Activated naive CD4-positive, alpha-beta T cell treated with anti-CD3 and anti-CD28 coated beads for 36 hours (primary cell): ENCODE measurements at regions of chr12 and their contacts with region 1.

Region 1: DNA sequence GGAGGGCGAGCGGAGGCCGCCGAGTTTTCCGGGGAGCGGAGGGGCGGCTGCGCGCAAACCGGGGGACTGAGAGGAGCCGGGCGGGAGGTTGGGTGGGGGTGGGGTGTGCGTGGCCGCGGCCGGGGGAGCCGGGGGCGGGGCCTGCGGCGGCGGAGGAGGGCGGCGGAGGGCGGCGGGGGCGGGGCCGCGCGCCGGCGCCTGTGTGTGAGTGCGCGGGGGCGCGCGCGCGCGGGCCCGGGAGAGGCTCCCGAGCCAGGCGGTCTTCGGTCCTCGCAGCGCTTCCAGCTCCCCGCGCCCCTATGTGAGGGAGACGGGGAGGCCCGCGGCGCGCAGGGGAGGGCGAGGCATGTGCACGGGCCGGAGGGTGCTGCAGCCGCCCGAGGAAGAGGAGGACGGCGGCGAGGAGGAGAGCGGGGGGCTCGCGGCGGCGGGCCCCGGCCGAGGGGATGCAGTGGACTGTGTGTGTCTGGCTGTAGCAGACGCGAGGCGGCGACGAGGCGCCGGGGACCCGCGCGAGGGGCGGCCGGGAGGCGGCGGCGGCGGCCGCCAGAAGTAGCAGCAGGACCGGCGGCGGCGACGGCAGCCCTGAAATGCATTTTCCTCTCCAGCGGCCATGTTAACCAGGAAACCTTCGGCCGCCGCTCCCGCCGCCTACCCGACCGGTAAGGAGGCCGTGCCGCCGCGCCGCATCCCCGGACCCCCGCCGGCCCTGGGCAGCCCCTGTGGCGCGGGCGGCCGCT is at the start of gene DYRK2:
- DNase-seq: peak; percentile 65
- H3K4me3 Mint-ChIP-seq: peak within 1 kb of the TSS; percentile 98
- H3K27ac Mint-ChIP-seq: peak within 1 kb of the TSS; percentile 81
- H3K4me1 Mint-ChIP-seq: peaks cover 41% of the 10 kb centered on the region
- H3K27me3 Mint-ChIP-seq: no peaks in the 10 kb centered on the region
- total RNA-seq, gene DYRK2: 29.3 to 30.0 TPM

Region 2: DNA sequence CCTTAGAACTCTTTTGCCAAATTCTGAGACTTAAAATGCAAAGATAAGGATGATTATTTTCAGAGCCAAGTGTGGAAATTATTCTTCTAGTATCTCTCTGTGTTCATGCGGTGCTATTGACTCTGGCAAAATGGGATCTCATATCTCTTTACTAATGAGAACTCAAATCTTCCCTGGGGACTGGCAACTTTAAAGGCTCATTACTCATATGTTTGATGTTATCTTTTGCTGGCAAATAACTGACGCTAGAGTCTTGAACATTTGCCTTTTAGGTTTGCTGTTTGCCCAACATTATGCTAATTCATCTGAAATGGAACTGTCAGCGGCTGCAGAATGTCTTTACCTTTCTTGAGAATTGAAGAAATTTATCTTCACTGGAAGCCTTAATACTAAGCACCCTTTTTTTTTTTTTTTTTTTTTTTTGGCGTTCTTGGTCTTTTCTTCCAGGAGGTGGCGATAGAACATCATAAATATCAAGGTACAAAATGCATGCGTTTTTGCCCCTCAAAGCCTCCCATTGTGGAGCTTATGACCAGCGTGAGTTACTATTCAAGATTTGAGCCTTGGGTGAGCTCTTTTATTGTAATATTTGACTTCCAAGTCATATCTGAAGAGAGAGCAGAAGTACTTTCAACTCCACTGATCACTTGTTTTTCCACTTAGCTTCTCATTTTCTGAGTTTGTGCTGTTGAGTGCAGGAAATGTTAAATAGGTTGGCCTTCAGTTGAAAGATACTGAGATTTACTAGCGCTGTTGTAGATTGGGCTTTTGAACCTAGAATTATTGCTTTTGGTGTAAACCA is 292.9 kb before region 1 on chr12:
- CTCF ChIA-PET with region 1: no interaction called
- intact Hi-C with region 1: loop called (anchors 5 kb)
- DNase-seq: peak; percentile 17
- H3K4me3 Mint-ChIP-seq: no peak overlapping the region
- H3K27ac Mint-ChIP-seq: no peak overlapping the region
- H3K4me1 Mint-ChIP-seq: peaks cover 25% of the 10 kb centered on the region
- H3K27me3 Mint-ChIP-seq: no peaks in the 10 kb centered on the region

Region 3: DNA sequence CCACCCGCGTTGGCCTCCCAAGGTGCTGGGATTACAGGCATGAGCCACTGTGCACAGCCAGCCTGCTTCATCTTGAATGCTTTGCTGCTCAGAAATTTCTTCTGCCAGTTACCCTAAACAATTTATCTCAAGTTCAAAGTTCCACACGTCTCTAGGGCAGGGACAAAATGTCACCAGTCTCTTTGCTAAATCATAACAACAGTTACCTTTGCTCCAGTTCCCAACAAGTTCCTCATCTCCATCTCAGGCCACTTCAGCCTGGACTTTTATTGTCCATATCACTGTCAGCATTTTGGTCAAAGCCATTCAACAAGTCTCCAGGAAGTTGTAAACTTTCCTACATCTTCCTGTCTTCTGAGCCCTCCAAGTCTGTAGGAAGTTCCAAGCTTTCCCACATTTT is 159.7 kb before region 1 on chr12:
- CTCF ChIA-PET with region 1: no interaction called
- intact Hi-C with region 1: no loop called
- DNase-seq: no peak
- H3K4me3 Mint-ChIP-seq: no peak overlapping the region
- H3K27ac Mint-ChIP-seq: no peak overlapping the region
- H3K4me1 Mint-ChIP-seq: peaks cover 21% of the 10 kb centered on the region
- H3K27me3 Mint-ChIP-seq: no peaks in the 10 kb centered on the region

Region 4: GRCh38 chr12:67578976-67579661 is 69.6 kb before region 1 on chr12:
- CTCF ChIA-PET with region 1: no interaction called
- intact Hi-C with region 1: loop called (anchors 5 kb)
- DNase-seq: peak; percentile 31
- H3K4me3 Mint-ChIP-seq: no peak overlapping the region
- H3K27ac Mint-ChIP-seq: no peak overlapping the region
- H3K4me1 Mint-ChIP-seq: peaks cover 38% of the 10 kb centered on the region
- H3K27me3 Mint-ChIP-seq: peaks cover 3% of the 10 kb centered on the region

Region 5: DNA sequence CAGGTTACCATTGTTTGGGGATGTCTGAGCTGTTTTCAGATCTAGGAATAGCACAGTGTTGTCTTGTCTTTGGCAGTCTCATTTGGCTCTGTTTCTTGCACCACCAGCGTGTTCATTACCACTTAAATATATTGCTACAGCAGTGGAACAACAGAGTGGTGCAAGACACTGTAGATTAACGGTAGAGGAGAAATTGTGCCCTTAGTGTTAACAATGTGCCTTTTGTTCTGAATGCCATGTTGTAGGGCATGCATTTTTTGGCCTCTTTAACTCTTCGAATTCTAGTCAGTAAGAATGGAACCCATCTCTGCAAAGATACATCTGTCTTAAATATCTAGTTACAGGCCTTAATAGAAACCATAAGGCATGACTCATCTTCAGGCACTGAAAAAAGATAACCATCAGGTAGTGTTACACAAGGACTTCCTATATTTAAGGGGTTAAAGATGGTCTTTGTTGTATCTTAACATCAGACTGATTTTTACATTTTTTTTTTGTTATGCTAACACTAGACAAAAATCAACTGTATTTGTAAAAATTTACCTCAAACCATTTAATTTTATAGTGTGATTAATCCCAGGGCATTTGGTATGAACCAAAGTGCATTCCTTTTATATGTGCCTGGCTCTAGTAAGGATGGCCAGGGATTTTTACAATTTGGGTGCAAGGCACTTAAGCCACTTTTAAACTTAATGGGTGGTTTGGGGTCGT is 12.8 kb after region 1 on chr12:
- CTCF ChIA-PET with region 1: no interaction called
- intact Hi-C with region 1: no loop called
- DNase-seq: no peak
- H3K4me3 Mint-ChIP-seq: no peak overlapping the region
- H3K27ac Mint-ChIP-seq: no peak overlapping the region
- H3K4me1 Mint-ChIP-seq: peaks cover 68% of the 10 kb centered on the region
- H3K27me3 Mint-ChIP-seq: no peaks in the 10 kb centered on the region

Region 6: DNA sequence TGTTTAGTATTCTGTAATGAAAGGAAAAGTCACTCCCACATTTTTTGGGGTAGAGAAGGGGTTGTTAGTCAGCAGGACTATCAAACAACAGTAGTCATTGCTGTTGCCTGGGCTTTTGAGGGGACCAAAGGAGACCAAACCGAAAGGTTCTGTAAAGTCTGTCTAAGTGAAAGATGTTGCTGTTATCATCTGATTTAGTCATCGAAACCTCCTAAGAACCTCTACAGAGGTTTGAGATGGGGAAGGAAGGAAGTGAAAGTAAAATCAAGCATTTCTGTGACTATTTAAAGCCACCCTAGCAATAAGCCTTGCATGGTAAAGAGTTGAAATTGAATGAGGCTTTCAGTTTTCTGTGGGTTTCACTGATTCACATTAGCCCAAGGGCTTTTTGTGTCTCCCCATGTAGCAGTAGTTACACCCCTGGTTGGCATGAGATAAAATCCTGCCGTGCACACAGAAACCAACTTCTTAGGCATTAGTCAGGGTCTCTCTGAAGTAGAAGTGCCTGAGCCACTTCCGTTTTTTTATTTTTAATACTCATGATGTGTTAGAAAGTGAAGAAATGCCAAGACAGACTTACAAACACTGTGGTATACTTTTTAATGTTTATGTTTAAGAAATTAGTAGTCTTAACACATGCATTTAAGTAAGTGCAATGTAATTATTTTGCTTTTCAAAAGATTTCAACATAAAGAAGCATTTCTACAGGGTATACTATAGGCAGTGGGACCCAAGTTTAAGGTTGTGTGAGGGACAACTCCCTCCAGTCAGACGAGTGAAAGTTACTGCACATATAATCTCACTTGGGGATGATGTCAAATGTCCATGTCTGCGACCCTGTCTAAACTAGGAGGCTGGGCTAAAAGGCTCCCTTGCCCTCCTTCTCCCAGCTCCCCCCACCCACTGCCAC is 50.2 kb after region 1 on chr12:
- CTCF ChIA-PET with region 1: interaction called, 3 read pairs
- intact Hi-C with region 1: loop called (anchors 1 kb)
- DNase-seq: peak; percentile 74
- H3K4me3 Mint-ChIP-seq: peak overlapping the region; percentile 28
- H3K27ac Mint-ChIP-seq: peak overlapping the region; percentile 64
- H3K4me1 Mint-ChIP-seq: peaks cover 51% of the 10 kb centered on the region
- H3K27me3 Mint-ChIP-seq: no peaks in the 10 kb centered on the region

Region 7: GRCh38 chr12:67710582-67710981 is 61.9 kb after region 1 on chr12:
- CTCF ChIA-PET with region 1: no interaction called
- intact Hi-C with region 1: no loop called
- DNase-seq: no peak
- H3K4me3 Mint-ChIP-seq: no peak overlapping the region
- H3K27ac Mint-ChIP-seq: no peak overlapping the region
- H3K4me1 Mint-ChIP-seq: no peaks in the 10 kb centered on the region
- H3K27me3 Mint-ChIP-seq: no peaks in the 10 kb centered on the region

Region 8: GRCh38 chr12:67943226-67943892 is 294.7 kb after region 1 on chr12:
- CTCF ChIA-PET with region 1: interaction called, 6 read pairs
- intact Hi-C with region 1: loop called (anchors 1 kb)
- DNase-seq: peak; percentile 87
- H3K4me3 Mint-ChIP-seq: no peak overlapping the region
- H3K27ac Mint-ChIP-seq: no peak overlapping the region
- H3K4me1 Mint-ChIP-seq: no peaks in the 10 kb centered on the region
- H3K27me3 Mint-ChIP-seq: peaks cover 3% of the 10 kb centered on the region

Region 9: DNA sequence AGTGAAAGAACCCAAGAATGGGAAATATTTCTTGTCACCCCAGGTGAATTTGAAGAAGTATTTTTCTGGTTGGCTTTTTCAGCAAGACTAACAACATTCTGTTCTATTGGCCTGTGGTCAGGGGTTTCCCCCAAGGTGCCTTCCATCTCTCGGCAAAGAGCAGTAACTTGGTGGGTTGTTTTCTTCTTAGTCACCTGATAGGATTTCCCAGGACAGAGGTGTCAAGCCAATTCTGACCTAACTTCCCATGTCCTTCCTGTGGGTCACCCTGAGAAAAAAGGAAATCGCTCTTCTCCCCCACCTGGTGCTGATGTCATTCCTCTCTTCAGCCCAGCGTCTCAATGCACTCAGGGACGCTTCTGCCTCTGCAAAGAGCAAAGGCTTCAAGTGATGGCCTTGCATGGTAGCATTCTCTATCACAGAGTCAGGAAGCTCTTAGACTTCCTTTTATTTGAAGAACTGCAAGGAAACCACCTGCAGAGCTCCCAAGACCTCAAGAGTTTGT is 526.9 kb after region 1 on chr12:
- CTCF ChIA-PET with region 1: no interaction called
- intact Hi-C with region 1: loop called (anchors 5 kb)
- DNase-seq: peak; percentile 87
- H3K4me3 Mint-ChIP-seq: peak overlapping the region; percentile 62
- H3K27ac Mint-ChIP-seq: peak overlapping the region; percentile 89
- H3K4me1 Mint-ChIP-seq: peaks cover 78% of the 10 kb centered on the region
- H3K27me3 Mint-ChIP-seq: no peaks in the 10 kb centered on the region